ENCODE measurements at regions of chr16 and their contacts with region 1.

Region 1: DNA sequence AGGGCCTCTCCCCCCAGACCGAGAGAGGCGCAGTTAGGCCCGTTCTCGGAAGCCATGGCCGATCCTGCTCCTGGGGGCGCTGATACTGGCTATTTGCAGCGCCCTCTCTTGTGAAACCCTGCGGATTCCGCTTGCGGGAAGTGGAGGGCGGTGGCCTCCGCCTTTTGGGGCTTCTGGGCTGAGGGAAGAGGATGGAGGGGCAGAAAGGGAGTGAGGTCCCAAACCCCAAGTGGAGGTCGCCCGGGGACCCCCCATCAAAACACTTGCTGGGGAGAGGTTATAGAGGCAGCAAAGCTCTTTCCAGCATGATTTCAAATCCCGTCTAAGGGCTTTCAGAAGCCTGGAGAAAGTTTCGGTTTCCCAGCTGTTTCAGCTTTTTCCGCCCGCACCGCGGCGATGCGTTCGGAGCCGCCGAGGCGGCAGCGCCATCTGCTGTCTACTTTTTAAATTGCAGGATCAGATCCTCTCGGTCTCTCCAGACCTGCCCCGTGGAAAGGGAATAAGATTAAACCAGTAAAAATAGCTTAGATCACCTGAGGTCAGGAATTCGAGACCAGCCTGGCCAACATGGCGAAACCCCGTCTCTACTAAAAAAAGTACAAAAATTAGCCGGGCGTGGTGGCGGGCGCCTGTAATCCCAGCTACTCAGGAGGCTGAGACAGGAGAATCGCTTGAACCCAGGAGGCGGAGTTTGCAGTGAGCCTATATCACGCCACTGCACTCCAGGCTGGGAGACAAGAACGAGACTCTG is 15.8 kb downstream of the SNX20 start:
- DNase-seq: peak; percentile 78 to 87 (median 80)
- ATAC-seq: peak; percentile 74 to 88 (median 81)
- H3K4me3 ChIP-seq: peak overlapping the region; percentile 9 to 60 (median 54)
- H3K27ac ChIP-seq: peak overlapping the region in 11 of 12 donors; percentile 49 to 87 (median 74)
- H3K4me1 ChIP-seq: peaks cover 0 to 46% (median 12%) of the 10 kb centered on the region in 12 donors
- H3K27me3 ChIP-seq: no peaks in the 10 kb centered on the region
- CTCF ChIP-seq: peak; percentile 85 to 97 (median 92)
- POLR2A ChIP-seq: no peak

Region 2: GRCh38 chr16:50210266-50211038 is 454.9 kb before region 1 on chr16:
- intact Hi-C with region 1: loop called in 7 of 10 experiments (anchors 5 to 10 kb)
- DNase-seq: peak; percentile 81 to 89 (median 82)
- ATAC-seq: peak; percentile 92 to 95 (median 94)
- H3K4me3 ChIP-seq: no peak overlapping the region
- H3K27ac ChIP-seq: peak overlapping the region in 3 of 12 donors; percentile 17 to 48 (median 40)
- H3K4me1 ChIP-seq: peaks cover 2 to 54% (median 37%) of the 10 kb centered on the region in 12 donors
- H3K27me3 ChIP-seq: no peaks in the 10 kb centered on the region
- CTCF ChIP-seq: peak; percentile 52 to 88 (median 71)
- POLR2A ChIP-seq: no peak

Region 3: GRCh38 chr16:50235581-50235980 is 429.7 kb before region 1 on chr16:
- intact Hi-C with region 1: loop called in 2 of 10 experiments (anchors 10 kb)
- DNase-seq: no peak
- ATAC-seq: peak in 2 of 4 donors; percentile 32 to 43
- H3K4me3 ChIP-seq: no peak overlapping the region
- H3K27ac ChIP-seq: no peak overlapping the region
- H3K4me1 ChIP-seq: no peaks in the 10 kb centered on the region
- H3K27me3 ChIP-seq: no peaks in the 10 kb centered on the region
- CTCF ChIP-seq: no peak
- POLR2A ChIP-seq: no peak

Region 4: GRCh38 chr16:50368410-50369132 is 296.7 kb before region 1 on chr16 and contains the start of gene BRD7:
- intact Hi-C with region 1: loop called in 8 of 10 experiments (anchors 2 to 10 kb)
- DNase-seq: peak; percentile 54 to 85 (median 70)
- ATAC-seq: peak; percentile 34 to 85 (median 68)
- H3K4me3 ChIP-seq: peak within 1 kb of the TSS; percentile 78 to 99 (median 96)
- H3K27ac ChIP-seq: peak within 1 kb of the TSS in 11 of 12 donors; percentile 39 to 82 (median 65)
- H3K4me1 ChIP-seq: peaks cover 7 to 48% (median 22%) of the 10 kb centered on the region in 12 donors
- H3K27me3 ChIP-seq: no peaks in the 10 kb centered on the region
- CTCF ChIP-seq: peak in 10 of 12 donors; percentile 33 to 76 (median 60)
- POLR2A ChIP-seq: no peak
- total RNA-seq, gene BRD7: 29.8 to 49.7 (median 45.3) TPM

Region 5: DNA sequence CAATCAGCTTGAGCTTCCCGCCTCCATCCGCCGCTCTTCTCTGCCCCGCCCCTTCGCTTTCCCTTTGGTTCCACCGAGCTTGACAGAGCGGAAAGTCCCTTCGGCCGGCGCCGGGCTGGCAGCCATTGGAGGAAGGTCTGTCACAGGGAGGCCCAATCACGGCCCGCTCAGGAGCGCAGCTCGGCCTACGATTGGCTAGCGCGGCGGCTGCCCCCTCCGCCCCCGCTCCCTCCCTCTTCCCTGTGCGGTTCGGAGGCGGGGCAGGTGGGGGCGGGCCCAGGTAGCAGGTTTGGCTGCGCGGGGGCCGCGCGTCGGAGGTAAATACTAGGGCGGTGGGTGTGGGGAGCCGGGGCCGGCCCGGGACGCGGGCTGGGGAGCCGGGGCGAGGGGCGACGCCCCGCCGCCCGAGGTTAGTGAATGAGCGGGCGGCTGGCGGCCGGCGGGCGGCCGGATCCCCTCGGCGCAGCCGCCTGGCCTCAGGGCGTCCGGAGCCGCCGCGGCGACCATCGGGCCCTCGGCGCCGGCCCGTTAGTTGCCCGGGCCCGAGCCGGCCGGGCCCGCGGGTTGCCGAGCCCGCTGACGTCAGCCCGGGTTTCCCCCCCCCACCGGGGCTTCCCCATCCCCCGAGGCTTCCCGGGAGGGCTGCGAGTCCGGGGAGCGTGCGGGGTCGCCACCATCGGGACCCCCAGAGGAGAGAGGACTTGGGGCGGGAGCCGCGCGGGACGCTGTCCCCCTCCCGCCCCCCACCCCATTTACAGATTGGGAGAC is 76.7 kb after region 1 on chr16 and contains the start of gene CYLD:
- intact Hi-C with region 1: loop called in 3 of 10 experiments (anchors 2 to 5 kb)
- DNase-seq: peak; percentile 100
- ATAC-seq: peak; percentile 99 to 100 (median 99)
- H3K4me3 ChIP-seq: peak within 1 kb of the TSS; percentile 70 to 96 (median 92)
- H3K27ac ChIP-seq: peak within 1 kb of the TSS in 11 of 12 donors; percentile 76 to 97 (median 87)
- H3K4me1 ChIP-seq: peaks cover 3 to 45% (median 15%) of the 10 kb centered on the region in 12 donors
- H3K27me3 ChIP-seq: no peaks in the 10 kb centered on the region
- CTCF ChIP-seq: no peak
- POLR2A ChIP-seq: peak in 1 of 2 donors; percentile 43
- total RNA-seq, gene CYLD: 20.2 to 68.8 (median 40.0) TPM

Region 6: DNA sequence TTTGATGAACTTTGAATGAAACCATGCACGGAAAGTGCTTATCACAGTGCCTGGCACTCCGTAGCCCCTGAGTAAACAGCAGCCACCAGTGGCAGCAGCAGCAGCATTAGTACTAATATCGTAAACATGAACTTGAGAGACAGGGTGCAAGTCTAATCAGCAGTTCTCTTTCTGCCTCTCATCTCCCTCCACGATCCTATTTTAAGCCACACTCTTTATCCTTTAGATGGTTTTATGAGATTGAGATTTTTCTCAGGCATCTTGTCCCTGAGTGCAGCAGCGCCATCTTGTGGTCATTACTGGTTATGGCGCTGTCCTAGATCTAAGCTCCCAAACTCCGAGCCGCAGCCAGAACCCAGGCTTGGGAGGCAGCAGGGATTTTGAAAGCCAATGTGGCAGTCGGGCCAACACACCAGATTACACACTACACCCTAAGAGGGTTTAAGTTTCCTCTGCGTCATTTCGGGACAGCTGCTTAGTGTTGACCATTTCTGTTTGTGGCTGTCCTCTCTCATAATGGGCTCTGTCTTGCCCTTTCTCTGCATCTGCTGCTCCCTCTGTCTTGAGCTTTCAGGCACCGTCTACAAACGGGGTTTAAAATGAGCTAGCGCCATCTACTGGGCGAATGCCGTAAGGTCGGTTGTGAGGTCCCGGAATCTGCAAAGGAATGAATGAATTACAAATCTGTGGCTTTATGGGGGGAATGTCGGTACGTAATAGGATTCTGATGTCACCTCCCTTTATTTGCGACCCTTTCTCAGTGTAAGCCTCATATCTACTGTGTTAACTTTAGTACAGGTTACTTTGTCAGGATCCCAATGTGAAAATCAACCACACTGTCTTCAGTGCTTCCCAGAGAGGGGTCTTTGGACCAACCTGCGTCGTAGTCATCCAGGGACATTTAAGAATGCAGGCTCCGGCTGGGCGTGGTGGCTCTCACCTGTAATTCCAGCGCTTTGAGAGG is 141.1 kb after region 1 on chr16:
- intact Hi-C with region 1: loop called (anchors 2 to 10 kb)
- DNase-seq: peak; percentile 75 to 83 (median 82)
- ATAC-seq: peak; percentile 85 to 95 (median 92)
- H3K4me3 ChIP-seq: peak overlapping the region in 10 of 12 donors; percentile 21 to 50 (median 39)
- H3K27ac ChIP-seq: peak overlapping the region in 5 of 12 donors; percentile 37 to 68 (median 44)
- H3K4me1 ChIP-seq: peaks cover 0 to 9% (median 3%) of the 10 kb centered on the region in 12 donors
- H3K27me3 ChIP-seq: no peaks in the 10 kb centered on the region
- CTCF ChIP-seq: peak; percentile 84 to 98 (median 94)
- POLR2A ChIP-seq: no peak

Measured in heart left ventricle (tissue), 16 donors.